Natural killer cell (primary cell): ENCODE measurements at regions of chr5 and their contacts with region 1.

Region 1: GRCh38 chr5:173057062-173057924 is 1.1 kb downstream of the CREBRF start:
- DNase-seq: peak; percentile 98 to 99
- ATAC-seq: peak; percentile 80 to 93 (median 83)
- H3K4me3 ChIP-seq: peak overlapping the region; percentile 86
- H3K4me3 Mint-ChIP-seq: peak overlapping the region; percentile 94
- H3K27ac ChIP-seq: peak overlapping the region; percentile 92
- H3K27ac Mint-ChIP-seq: peak overlapping the region; percentile 89 to 95
- H3K4me1 ChIP-seq: peaks cover 8% of the 10 kb centered on the region
- H3K4me1 Mint-ChIP-seq: peaks cover 36 to 37% of the 10 kb centered on the region in 2 donors
- H3K27me3 ChIP-seq: no peaks in the 10 kb centered on the region
- H3K27me3 Mint-ChIP-seq: peaks cover 4 to 10% of the 10 kb centered on the region in 2 donors
- CTCF ChIP-seq: no peak

Region 2: GRCh38 chr5:172860520-172861443 is 196.5 kb before region 1 on chr5:
- intact Hi-C with region 1: no loop called
- DNase-seq: no peak
- ATAC-seq: peak in 1 of 3 donors; percentile 5
- H3K4me3 ChIP-seq: no peak overlapping the region
- H3K4me3 Mint-ChIP-seq: peak overlapping the region; percentile 60
- H3K27ac ChIP-seq: no peak overlapping the region
- H3K27ac Mint-ChIP-seq: peak overlapping the region; percentile 69 to 71
- H3K4me1 ChIP-seq: peaks cover 42% of the 10 kb centered on the region
- H3K4me1 Mint-ChIP-seq: peaks cover 51 to 67% of the 10 kb centered on the region in 2 donors
- H3K27me3 ChIP-seq: no peaks in the 10 kb centered on the region
- H3K27me3 Mint-ChIP-seq: no peaks in the 10 kb centered on the region
- CTCF ChIP-seq: no peak

Region 3: GRCh38 chr5:172958331-172959046 is 98.8 kb before region 1 on chr5:
- intact Hi-C with region 1: loop called (anchors 1 kb)
- DNase-seq: peak; percentile 57 to 78
- ATAC-seq: peak; percentile 67 to 83 (median 78)
- H3K4me3 ChIP-seq: peak overlapping the region; percentile 64
- H3K4me3 Mint-ChIP-seq: peak overlapping the region; percentile 96
- H3K27ac ChIP-seq: peak overlapping the region; percentile 75
- H3K27ac Mint-ChIP-seq: peak overlapping the region; percentile 94 to 97
- H3K4me1 ChIP-seq: peaks cover 17% of the 10 kb centered on the region
- H3K4me1 Mint-ChIP-seq: peaks cover 31 to 34% of the 10 kb centered on the region in 2 donors
- H3K27me3 ChIP-seq: no peaks in the 10 kb centered on the region
- H3K27me3 Mint-ChIP-seq: no peaks in the 10 kb centered on the region
- CTCF ChIP-seq: no peak

Region 4: GRCh38 chr5:173144200-173145176 is 87.2 kb after region 1 on chr5 and contains the start of gene BNIP1:
- intact Hi-C with region 1: loop called (anchors 1 kb)
- DNase-seq: peak; percentile 98
- ATAC-seq: peak; percentile 86 to 98 (median 87)
- H3K4me3 ChIP-seq: peak within 1 kb of the TSS; percentile 92
- H3K4me3 Mint-ChIP-seq: peak within 1 kb of the TSS; percentile 94
- H3K27ac ChIP-seq: peak within 1 kb of the TSS; percentile 96
- H3K27ac Mint-ChIP-seq: peak within 1 kb of the TSS; percentile 97 to 100
- H3K4me1 ChIP-seq: peaks cover 9% of the 10 kb centered on the region
- H3K4me1 Mint-ChIP-seq: peaks cover 5 to 11% of the 10 kb centered on the region in 2 donors
- H3K27me3 ChIP-seq: no peaks in the 10 kb centered on the region
- H3K27me3 Mint-ChIP-seq: no peaks in the 10 kb centered on the region
- CTCF ChIP-seq: peak; percentile 87
- total RNA-seq, gene BNIP1: 29.4 to 34.8 (median 33.0) TPM